GM10248 (cell line): ENCODE measurements at regions of chr14 and their contacts with region 1.

Region 1: DNA sequence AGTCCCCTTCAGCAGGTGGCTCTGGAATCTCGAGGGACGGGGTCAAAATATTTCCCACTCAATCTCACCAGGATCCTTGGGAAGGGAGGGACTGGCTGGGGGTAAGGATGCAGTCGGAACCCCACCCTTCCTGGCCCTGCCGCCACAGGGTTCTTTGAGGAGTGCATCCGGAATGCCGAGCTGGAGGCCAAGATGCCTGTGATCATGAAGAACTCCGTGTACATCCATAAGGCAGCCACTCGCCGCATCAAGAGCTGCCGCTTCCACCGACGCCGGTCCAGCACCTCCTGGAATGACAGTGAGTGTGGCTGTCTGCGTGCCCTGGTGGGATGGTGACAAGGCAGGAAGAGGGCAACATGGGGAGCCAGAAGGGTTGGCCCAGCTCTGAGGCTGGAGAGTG is 43.1 kb downstream of the PLEKHD1 start:
- DNase-seq: no peak
- CTCF ChIP-seq: no peak

Region 2: GRCh38 chr14:69547701-69548348 is 20.2 kb after region 1 on chr14:
- CTCF ChIA-PET with region 1: interaction called, 13 read pairs
- POLR2A ChIA-PET with region 1: no interaction called
- DNase-seq: peak; percentile 50
- CTCF ChIP-seq: peak; percentile 39

Region 3: DNA sequence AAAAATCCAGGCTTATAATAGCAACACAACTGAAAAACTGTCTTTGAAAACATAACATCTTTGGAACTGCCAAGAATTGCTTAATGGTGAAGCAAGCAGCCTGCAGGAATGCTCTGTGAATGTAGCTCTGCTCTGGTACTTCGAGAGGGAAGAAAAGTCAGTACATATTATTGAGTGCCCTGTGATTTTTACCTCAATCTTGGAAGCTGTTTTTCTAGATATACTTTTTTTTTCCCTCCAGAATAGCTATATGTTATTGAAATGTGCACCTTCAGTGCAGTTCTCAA is 1887.7 kb after region 1 on chr14:
- CTCF ChIA-PET with region 1: no interaction called
- POLR2A ChIA-PET with region 1: no interaction called
- DNase-seq: no peak
- CTCF ChIP-seq: no peak